Activated CD4-positive, alpha-beta T cell treated with anti-CD3 and anti-CD28 coated beads, Interleukin-2, amount 10 ng/mL, durations not matched to agents 24 days and 14 days (primary cell): ENCODE measurements at regions of chr1 and their contacts with region 1.

Region 1: DNA sequence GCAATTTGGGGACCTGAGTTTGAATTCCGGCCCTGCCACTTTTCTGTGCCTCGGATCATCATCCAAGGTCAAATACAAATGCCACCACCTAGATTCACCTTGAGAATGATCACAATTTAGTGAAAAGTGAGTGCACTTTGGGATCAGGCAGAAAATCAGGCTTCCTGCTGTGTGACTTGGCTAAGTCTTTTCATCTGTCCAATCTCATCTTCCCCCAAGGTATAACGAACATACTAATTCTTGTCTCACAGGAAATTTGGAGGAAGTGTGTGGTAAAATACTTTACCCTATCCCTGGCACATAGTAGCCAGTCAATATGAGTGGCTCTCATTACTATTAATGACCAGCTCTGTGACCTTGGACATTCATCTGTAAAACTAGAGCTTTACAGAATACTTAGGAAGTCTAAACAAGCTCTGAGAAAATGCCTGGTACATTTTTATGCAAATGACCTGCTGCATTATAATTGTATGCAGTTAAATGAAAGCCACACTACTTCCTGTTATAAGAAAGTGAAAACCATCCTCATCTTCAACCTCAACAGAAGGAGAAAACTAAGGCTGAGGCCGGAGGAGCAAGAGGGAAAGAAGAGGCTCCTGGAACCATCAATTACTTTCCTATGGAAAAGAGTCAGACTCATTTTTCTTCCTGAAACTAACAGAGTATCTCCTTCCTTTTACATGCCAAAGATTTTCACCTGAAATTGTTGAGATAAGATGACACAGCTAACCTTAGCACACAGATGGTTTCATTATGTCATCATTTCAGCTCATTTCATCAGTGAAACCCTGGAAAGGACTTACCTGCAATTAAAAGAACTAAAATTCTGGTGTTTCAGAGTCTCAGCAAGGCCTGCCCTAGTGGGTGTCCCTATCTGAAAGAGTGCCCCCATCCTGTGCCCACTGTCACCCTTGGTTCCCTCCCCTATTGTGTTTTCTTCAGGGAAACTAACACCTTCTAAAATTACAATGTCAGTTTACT is 32.6 kb upstream of the RGS8 start:
- DNase-seq: no peak
- H3K4me3 Mint-ChIP-seq: no peak overlapping the region
- H3K27ac Mint-ChIP-seq: peak overlapping the region; percentile 22
- H3K4me1 Mint-ChIP-seq: peaks cover 42% of the 10 kb centered on the region
- H3K27me3 Mint-ChIP-seq: no peaks in the 10 kb centered on the region

Region 2: GRCh38 chr1:182839209-182840065 is 122.4 kb after region 1 on chr1 and contains the start of gene DHX9:
- intact Hi-C with region 1: loop called (anchors 2 kb)
- DNase-seq: peak; percentile 99
- H3K4me3 Mint-ChIP-seq: peak within 1 kb of the TSS; percentile 92
- H3K27ac Mint-ChIP-seq: peak within 1 kb of the TSS; percentile 94
- H3K4me1 Mint-ChIP-seq: peaks cover 37% of the 10 kb centered on the region
- H3K27me3 Mint-ChIP-seq: peaks cover 3% of the 10 kb centered on the region
- total RNA-seq, gene DHX9: 344 and 355 TPM in 2 replicates